ENCODE measurements at regions of chr3 and their contacts with region 1.

Region 1: GRCh38 chr3:120101624-120102023 is 7.4 kb upstream of the GSK3B start:
- DNase-seq: no peak
- ATAC-seq: no peak
- H3K4me3 Mint-ChIP-seq: no peak overlapping the region
- H3K27ac Mint-ChIP-seq: no peak overlapping the region
- H3K4me1 Mint-ChIP-seq: peaks cover 9% of the 10 kb centered on the region
- H3K27me3 Mint-ChIP-seq: no peaks in the 10 kb centered on the region
- CTCF ChIP-seq: no peak

Region 2: GRCh38 chr3:119911748-119912147 is 189.9 kb before region 1 on chr3:
- CTCF ChIA-PET with region 1: no interaction called
- POLR2A ChIA-PET with region 1: interaction called, 17 read pairs
- DNase-seq: no peak
- ATAC-seq: no peak
- H3K4me3 Mint-ChIP-seq: no peak overlapping the region
- H3K27ac Mint-ChIP-seq: peak overlapping the region; percentile 53; the same call in 1 of the 2 replicates
- H3K4me1 Mint-ChIP-seq: peaks cover 31% of the 10 kb centered on the region
- H3K27me3 Mint-ChIP-seq: no peaks in the 10 kb centered on the region
- CTCF ChIP-seq: no peak

Region 3: DNA sequence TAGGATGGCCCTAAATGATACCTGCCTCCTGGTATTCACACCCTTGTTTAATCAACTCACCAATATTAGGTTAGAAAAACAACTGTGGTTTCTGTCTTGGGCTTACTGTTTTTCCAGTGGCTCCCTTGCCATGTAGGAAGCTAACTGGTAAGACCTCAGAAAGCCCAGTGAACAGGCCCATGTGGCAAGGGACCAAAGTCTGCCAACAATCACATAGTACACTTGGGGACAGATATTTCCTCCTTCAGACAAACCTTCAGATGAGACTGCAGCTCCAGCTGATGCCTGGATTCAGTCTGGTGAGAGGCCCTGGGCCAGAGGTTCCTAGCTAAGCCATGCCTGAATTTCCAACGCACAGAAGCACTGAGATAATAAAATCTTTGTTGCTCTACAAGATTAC is 103.5 kb before region 1 on chr3:
- CTCF ChIA-PET with region 1: no interaction called
- POLR2A ChIA-PET with region 1: no interaction called
- DNase-seq: no peak
- ATAC-seq: no peak
- H3K4me3 Mint-ChIP-seq: no peak overlapping the region
- H3K27ac Mint-ChIP-seq: no peak overlapping the region
- H3K4me1 Mint-ChIP-seq: peaks cover 6% of the 10 kb centered on the region; the same call in 1 of the 2 replicates
- H3K27me3 Mint-ChIP-seq: no peaks in the 10 kb centered on the region
- CTCF ChIP-seq: no peak

Measured in WTC11 (cell line).